Caco-2 (cell line): ENCODE measurements at regions of chr4 and their contacts with region 1.

Region 1: DNA sequence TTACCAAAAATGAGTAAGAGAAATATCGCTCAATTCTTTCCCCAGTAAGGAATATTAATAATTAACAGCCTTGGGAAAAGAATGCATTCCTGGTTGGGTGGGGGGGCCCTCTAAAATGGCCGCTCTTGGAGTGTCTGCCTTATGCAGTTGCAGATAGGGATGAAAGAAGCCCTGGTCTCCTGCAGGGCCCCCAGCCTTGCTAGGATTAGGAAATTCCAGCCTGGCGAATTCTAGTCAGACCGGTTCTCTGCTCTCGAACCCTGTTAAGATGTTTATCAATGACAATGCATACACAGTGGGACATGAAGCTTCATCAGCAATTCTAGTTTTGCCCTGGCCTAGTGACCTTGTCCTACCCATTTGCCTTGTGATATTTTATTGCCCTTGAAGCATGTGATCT is 1047.7 kb upstream of the GRID2 start:
- DNase-seq: peak; percentile 61 to 66
- H3K4me3 ChIP-seq: no peak overlapping the region
- H3K4me3 Mint-ChIP-seq: no peak overlapping the region
- H3K27ac Mint-ChIP-seq: no peak overlapping the region
- H3K4me1 ChIP-seq: peaks cover 10% of the 10 kb centered on the region; the same call in 1 of the 2 replicates
- H3K4me1 Mint-ChIP-seq: no peaks in the 10 kb centered on the region
- H3K27me3 ChIP-seq: no peaks in the 10 kb centered on the region
- H3K27me3 Mint-ChIP-seq: no peaks in the 10 kb centered on the region
- CTCF ChIP-seq: no peak

Region 2: DNA sequence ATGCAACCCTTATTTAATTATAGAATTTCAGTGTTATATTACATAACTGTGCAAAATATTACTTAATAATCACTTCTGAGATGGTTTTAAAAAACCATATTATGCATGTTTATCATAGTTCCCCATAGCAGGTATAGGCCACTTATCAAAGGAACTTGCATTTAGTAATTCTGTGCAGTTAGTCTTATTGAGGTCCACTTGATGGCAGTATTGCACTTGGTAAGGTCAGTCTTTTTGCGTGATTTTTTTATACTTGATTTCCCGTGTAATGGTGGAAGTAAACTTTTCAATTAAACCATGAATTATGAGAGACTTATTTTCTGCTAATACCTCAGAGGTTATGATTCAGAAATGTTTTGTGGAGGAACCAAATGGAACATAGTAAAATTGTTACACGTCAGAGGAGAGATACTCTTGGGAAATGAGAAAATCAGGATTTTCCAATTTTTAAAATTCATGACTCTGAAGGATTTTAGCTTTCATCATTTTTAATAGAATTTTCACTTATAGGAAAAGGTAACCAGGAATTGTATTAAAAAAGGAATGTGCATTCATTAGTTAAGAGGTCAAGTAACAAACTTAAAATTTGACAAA is 898.8 kb before region 1 on chr4:
- CTCF ChIA-PET with region 1: no interaction called
- POLR2A ChIA-PET with region 1: no interaction called
- intact Hi-C with region 1: no loop called
- DNase-seq: peak in 1 of 2 experiments; percentile 4
- H3K4me3 ChIP-seq: no peak overlapping the region
- H3K4me3 Mint-ChIP-seq: no peak overlapping the region
- H3K27ac Mint-ChIP-seq: no peak overlapping the region
- H3K4me1 ChIP-seq: no peaks in the 10 kb centered on the region
- H3K4me1 Mint-ChIP-seq: no peaks in the 10 kb centered on the region
- H3K27me3 ChIP-seq: no peaks in the 10 kb centered on the region
- H3K27me3 Mint-ChIP-seq: no peaks in the 10 kb centered on the region
- CTCF ChIP-seq: peak; percentile 34 to 38

Region 3: GRCh38 chr4:90979556-90979955 is 276.5 kb before region 1 on chr4:
- CTCF ChIA-PET with region 1: no interaction called
- POLR2A ChIA-PET with region 1: no interaction called
- intact Hi-C with region 1: no loop called
- DNase-seq: no peak
- H3K4me3 ChIP-seq: no peak overlapping the region
- H3K4me3 Mint-ChIP-seq: no peak overlapping the region
- H3K27ac Mint-ChIP-seq: no peak overlapping the region
- H3K4me1 ChIP-seq: no peaks in the 10 kb centered on the region
- H3K4me1 Mint-ChIP-seq: no peaks in the 10 kb centered on the region
- H3K27me3 ChIP-seq: no peaks in the 10 kb centered on the region
- H3K27me3 Mint-ChIP-seq: no peaks in the 10 kb centered on the region
- CTCF ChIP-seq: no peak

Region 4: DNA sequence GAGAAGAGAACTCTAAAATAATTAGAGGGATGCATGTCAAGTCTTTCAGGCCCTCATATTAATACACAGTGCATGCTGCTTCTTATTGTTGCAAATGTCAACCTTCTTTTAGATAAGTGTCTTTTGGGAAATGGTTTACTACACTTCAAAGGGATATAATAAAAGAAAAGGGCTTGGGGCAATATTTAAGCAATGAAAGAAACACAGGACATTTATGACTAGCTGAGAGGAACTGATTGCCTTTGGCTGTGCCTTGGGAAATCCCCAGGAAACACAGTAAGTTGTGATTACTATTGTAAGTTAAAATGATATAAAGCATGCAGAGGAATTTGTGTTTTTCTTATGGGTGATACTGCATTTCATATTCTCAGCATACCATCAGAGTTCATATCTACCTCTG is 11.5 kb after region 1 on chr4:
- CTCF ChIA-PET with region 1: no interaction called
- POLR2A ChIA-PET with region 1: no interaction called
- intact Hi-C with region 1: loop called (anchors 1 kb)
- DNase-seq: peak in 1 of 2 experiments; percentile 5
- H3K4me3 ChIP-seq: no peak overlapping the region
- H3K4me3 Mint-ChIP-seq: no peak overlapping the region
- H3K27ac Mint-ChIP-seq: no peak overlapping the region
- H3K4me1 ChIP-seq: peaks cover 13% of the 10 kb centered on the region
- H3K4me1 Mint-ChIP-seq: no peaks in the 10 kb centered on the region
- H3K27me3 ChIP-seq: no peaks in the 10 kb centered on the region
- H3K27me3 Mint-ChIP-seq: no peaks in the 10 kb centered on the region
- CTCF ChIP-seq: no peak

Region 5: DNA sequence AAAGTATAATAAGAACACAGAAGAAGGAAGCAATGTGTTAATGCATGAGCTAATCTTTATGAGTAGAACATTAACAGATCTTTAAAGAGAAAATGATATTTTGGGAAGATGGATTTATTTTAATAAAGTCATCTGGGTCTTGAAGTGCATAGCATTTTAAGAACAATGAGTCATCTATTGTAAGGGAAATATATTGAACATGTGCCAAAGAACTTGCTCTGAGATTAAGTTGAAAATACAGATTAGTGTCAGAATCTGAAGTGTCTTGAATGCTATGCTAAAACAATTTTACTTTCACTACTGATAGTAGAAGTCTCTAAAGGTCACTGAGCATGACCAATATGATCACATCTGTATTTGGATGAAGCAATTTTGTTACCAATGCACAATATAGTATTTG is 271.0 kb after region 1 on chr4:
- CTCF ChIA-PET with region 1: no interaction called
- POLR2A ChIA-PET with region 1: no interaction called
- intact Hi-C with region 1: loop called (anchors 5 kb)
- DNase-seq: no peak
- H3K4me3 ChIP-seq: no peak overlapping the region
- H3K4me3 Mint-ChIP-seq: no peak overlapping the region
- H3K27ac Mint-ChIP-seq: peak overlapping the region; percentile 95
- H3K4me1 ChIP-seq: peaks cover 30% of the 10 kb centered on the region
- H3K4me1 Mint-ChIP-seq: peaks cover 31% of the 10 kb centered on the region
- H3K27me3 ChIP-seq: no peaks in the 10 kb centered on the region
- H3K27me3 Mint-ChIP-seq: no peaks in the 10 kb centered on the region
- CTCF ChIP-seq: no peak